Dorsolateral prefrontal cortex (tissue), 120 donors: ENCODE measurements at regions of chr5 and their contacts with region 1.

Region 1: GRCh38 chr5:170267431-170268152 is 30.0 kb downstream of the LCP2 start:
- DNase-seq: peak; percentile 59 to 85 (median 76)
- H3K4me3 ChIP-seq: peak overlapping the region in 39 of 59 donors; percentile 4 to 51 (median 28)
- H3K27ac ChIP-seq: peak overlapping the region in 42 of 59 donors; percentile 2 to 92 (median 46)
- H3K27me3 ChIP-seq: peaks cover 0 to 2% (median 0%) of the 10 kb centered on the region in 45 donors
- CTCF ChIP-seq: peak; percentile 73 to 97 (median 91)

Region 2: GRCh38 chr5:170300361-170301013 is 32.9 kb after region 1 on chr5:
- intact Hi-C with region 1: no loop called
- DNase-seq: no peak
- H3K4me3 ChIP-seq: no peak overlapping the region
- H3K27ac ChIP-seq: peak overlapping the region in 2 of 59 donors; percentile 59 to 65
- H3K27me3 ChIP-seq: no peaks in the 10 kb centered on the region
- CTCF ChIP-seq: no peak

Region 3: GRCh38 chr5:170312666-170313065 is 45.1 kb after region 1 on chr5:
- intact Hi-C with region 1: loop called in 1 of 2 experiments (anchors 2 kb)
- DNase-seq: peak in 1 of 10 donors; percentile 26
- H3K4me3 ChIP-seq: no peak overlapping the region
- H3K27ac ChIP-seq: peak overlapping the region in 1 of 59 donors; percentile 27
- H3K27me3 ChIP-seq: no peaks in the 10 kb centered on the region
- CTCF ChIP-seq: no peak

Region 4: GRCh38 chr5:170348137-170348633 is 80.6 kb after region 1 on chr5:
- intact Hi-C with region 1: loop called (anchors 5 kb)
- DNase-seq: no peak
- H3K4me3 ChIP-seq: peak overlapping the region in 6 of 59 donors; percentile 22 to 35 (median 26)
- H3K27ac ChIP-seq: no peak overlapping the region
- H3K27me3 ChIP-seq: peaks cover 0 to 20% (median 3%) of the 10 kb centered on the region in 45 donors
- CTCF ChIP-seq: peak in 53 of 56 donors; percentile 12 to 72 (median 41)

Region 5: DNA sequence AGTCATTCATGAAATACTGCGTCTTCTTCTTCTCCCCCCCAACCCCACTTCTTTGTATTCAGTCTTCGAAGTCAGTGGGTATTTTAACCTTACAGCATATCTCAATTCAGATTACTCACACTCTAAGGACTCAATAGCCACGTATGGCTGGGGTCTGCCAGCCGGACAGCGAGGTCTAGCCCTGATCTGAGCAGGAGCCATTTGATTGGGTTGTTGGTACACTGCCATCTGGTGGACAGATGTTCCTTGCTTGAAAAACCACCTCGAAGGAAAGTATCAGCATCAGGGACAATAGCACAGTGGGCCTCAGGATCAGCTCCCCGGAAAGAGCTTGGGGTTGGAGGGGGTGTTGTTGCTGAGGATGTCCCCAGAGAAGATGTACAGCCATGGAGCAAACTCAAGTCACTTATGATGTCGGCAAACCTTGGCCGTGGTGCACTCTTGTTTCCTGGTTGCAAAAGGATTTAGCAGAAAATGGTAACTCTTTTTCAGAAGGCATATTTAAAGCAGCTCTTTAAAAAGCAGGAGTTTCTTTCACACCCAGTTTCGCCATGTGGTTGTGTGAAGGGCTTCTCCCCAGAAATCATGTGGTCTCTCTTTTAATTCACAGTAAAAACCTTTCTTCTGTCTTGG is 153.3 kb after region 1 on chr5:
- intact Hi-C with region 1: loop called (anchors 2 to 5 kb)
- DNase-seq: peak in 5 of 10 donors; percentile 40 to 67 (median 59)
- H3K4me3 ChIP-seq: no peak overlapping the region
- H3K27ac ChIP-seq: peak overlapping the region in 1 of 59 donors; percentile 10
- H3K27me3 ChIP-seq: peaks cover 0 to 5% (median 0%) of the 10 kb centered on the region in 45 donors
- CTCF ChIP-seq: peak; percentile 71 to 91 (median 81)